ENCODE measurements at regions of chr7 and their contacts with region 1.

Region 1: GRCh38 chr7:107743567-107744344 is at the start of gene CBLL1:
- DNase-seq: peak; percentile 96 to 98 (median 97)
- H3K4me3 ChIP-seq: peak within 1 kb of the TSS; percentile 97 to 98
- H3K4me3 Mint-ChIP-seq: peak within 1 kb of the TSS; percentile 90 to 100 (median 97)
- H3K27ac ChIP-seq: peak within 1 kb of the TSS; percentile 99
- H3K27ac Mint-ChIP-seq: peak within 1 kb of the TSS; percentile 99 to 100 (median 100)
- H3K4me1 ChIP-seq: peaks cover 55% of the 10 kb centered on the region
- H3K4me1 Mint-ChIP-seq: peaks cover 27 to 57% (median 41%) of the 10 kb centered on the region in 4 donors
- H3K27me3 ChIP-seq: no peaks in the 10 kb centered on the region
- H3K27me3 Mint-ChIP-seq: no peaks in the 10 kb centered on the region
- total RNA-seq, gene CBLL1: 79.1 to 82.8 TPM

Region 2: GRCh38 chr7:106865130-106866041 is 878.4 kb before region 1 on chr7 and contains the start of gene PIK3CG:
- CTCF ChIA-PET with region 1: no interaction called
- POLR2A ChIA-PET with region 1: no interaction called
- intact Hi-C with region 1: loop called (anchors 5 kb)
- DNase-seq: peak; percentile 58 to 77 (median 66)
- H3K4me3 ChIP-seq: peak within 1 kb of the TSS; percentile 68 to 83
- H3K4me3 Mint-ChIP-seq: peak within 1 kb of the TSS; percentile 90 to 97 (median 93)
- H3K27ac ChIP-seq: peak within 1 kb of the TSS; percentile 66
- H3K27ac Mint-ChIP-seq: peak within 1 kb of the TSS; percentile 88 to 95 (median 92)
- H3K4me1 ChIP-seq: peaks cover 67% of the 10 kb centered on the region
- H3K4me1 Mint-ChIP-seq: peaks cover 57 to 87% (median 69%) of the 10 kb centered on the region in 4 donors
- H3K27me3 ChIP-seq: no peaks in the 10 kb centered on the region
- H3K27me3 Mint-ChIP-seq: no peaks in the 10 kb centered on the region
- total RNA-seq, gene PIK3CG: 32.3 to 32.6 TPM

Region 3: DNA sequence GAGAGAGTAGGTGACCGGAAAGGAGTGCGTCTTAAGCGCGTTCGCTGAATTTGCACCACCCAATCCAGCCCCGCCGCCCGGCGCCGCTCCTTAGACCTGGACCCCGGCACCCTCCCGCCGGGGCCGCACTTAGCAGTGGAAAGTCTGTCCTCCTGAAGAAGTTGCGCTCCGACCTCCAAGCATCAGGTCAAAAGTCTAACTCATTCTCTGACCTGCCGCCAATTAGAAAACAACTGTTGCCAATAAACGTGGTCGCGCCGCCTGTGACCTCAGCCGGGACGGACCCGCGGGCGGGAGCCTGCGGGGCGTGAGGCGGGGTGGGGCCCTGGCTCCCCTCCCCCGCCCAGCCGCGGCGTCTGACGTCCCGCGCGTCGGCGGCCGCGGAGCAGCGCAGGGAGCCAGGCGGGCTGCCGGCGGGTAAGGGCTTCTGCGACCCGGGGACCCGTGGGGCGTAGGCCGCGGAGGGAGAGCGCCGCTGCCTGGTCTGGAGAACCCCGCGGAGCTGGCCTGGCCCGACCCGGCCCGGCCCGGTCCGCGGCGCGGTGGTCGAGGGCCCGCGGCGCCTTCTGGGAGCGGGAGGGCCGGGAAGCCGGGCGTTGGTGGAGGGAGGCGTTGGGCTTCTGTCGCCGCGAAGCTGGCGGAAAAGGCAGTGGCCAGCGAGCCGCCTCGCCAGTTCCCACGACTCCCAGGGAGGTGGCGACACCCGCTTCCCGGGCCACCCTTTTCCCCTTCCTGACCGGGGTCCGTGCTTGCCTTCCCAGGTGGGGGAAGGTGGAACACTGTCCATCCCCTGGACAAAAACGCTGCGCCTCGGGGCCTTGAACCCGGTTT is 163.7 kb before region 1 on chr7 and contains the start of gene BCAP29:
- CTCF ChIA-PET with region 1: interaction called, 3 read pairs
- POLR2A ChIA-PET with region 1: interaction called, 10 read pairs
- intact Hi-C with region 1: loop called (anchors 5 kb)
- DNase-seq: peak; percentile 66 to 74 (median 70)
- H3K4me3 ChIP-seq: peak within 1 kb of the TSS; percentile 43 to 74
- H3K4me3 Mint-ChIP-seq: peak within 1 kb of the TSS; percentile 84 to 94 (median 92)
- H3K27ac ChIP-seq: peak within 1 kb of the TSS; percentile 54
- H3K27ac Mint-ChIP-seq: peak within 1 kb of the TSS; percentile 71 to 96 (median 94)
- H3K4me1 ChIP-seq: peaks cover 25% of the 10 kb centered on the region
- H3K4me1 Mint-ChIP-seq: peaks cover 15 to 25% (median 19%) of the 10 kb centered on the region in 4 donors
- H3K27me3 ChIP-seq: no peaks in the 10 kb centered on the region
- H3K27me3 Mint-ChIP-seq: no peaks in the 10 kb centered on the region
- total RNA-seq, gene BCAP29: 17.0 to 18.7 TPM

Region 4: GRCh38 chr7:107768272-107768671 is 24.5 kb after region 1 on chr7:
- CTCF ChIA-PET with region 1: interaction called, 9 read pairs
- POLR2A ChIA-PET with region 1: interaction called, 14 read pairs
- intact Hi-C with region 1: no loop called
- DNase-seq: no peak
- H3K4me3 ChIP-seq: no peak overlapping the region
- H3K4me3 Mint-ChIP-seq: no peak overlapping the region
- H3K27ac ChIP-seq: no peak overlapping the region
- H3K27ac Mint-ChIP-seq: no peak overlapping the region
- H3K4me1 ChIP-seq: no peaks in the 10 kb centered on the region
- H3K4me1 Mint-ChIP-seq: peaks cover 10 to 28% (median 23%) of the 10 kb centered on the region in 4 donors
- H3K27me3 ChIP-seq: no peaks in the 10 kb centered on the region
- H3K27me3 Mint-ChIP-seq: no peaks in the 10 kb centered on the region

Region 5: DNA sequence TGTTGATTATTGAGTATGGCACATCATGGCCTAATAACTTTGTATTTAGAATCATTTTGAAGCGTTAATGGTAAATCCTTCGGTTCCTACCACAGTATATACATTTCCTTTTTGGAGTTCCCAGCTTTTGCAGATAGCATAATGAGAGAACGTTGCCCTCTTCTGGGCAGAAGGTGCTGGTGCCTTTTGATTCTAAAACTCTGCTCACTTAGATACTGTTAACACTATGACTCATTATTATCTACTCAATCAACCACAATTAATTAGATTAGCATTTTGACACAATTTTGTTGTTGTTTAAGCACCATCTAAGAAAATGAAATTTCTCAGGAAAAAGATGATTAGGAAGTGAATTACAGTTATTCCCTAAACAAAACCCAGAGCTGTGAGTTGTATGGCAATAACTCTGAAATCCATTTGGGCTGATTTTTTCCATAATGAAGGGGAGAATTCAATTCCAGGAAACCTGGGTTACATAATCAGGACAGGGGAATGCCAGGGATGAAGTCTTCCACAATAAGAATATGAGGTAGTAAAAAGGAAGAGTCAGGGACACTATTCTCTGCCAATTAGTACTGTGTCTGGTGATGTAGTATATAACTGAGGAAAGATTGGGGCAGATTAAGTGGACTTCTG is 135.8 kb after region 1 on chr7:
- CTCF ChIA-PET with region 1: interaction called, 504 read pairs
- POLR2A ChIA-PET with region 1: interaction called, 408 read pairs
- intact Hi-C with region 1: loop called (anchors 1 kb)
- DNase-seq: peak; percentile 53 to 68 (median 57)
- H3K4me3 ChIP-seq: no peak overlapping the region
- H3K4me3 Mint-ChIP-seq: no peak overlapping the region
- H3K27ac ChIP-seq: no peak overlapping the region
- H3K27ac Mint-ChIP-seq: peak overlapping the region in 2 of 7 donors; percentile 4 to 52
- H3K4me1 ChIP-seq: peaks cover 18% of the 10 kb centered on the region
- H3K4me1 Mint-ChIP-seq: peaks cover 13 to 26% (median 21%) of the 10 kb centered on the region in 4 donors
- H3K27me3 ChIP-seq: no peaks in the 10 kb centered on the region
- H3K27me3 Mint-ChIP-seq: peaks cover 3 to 6% of the 10 kb centered on the region in 2 donors